ENCODE measurements at regions of chr13 and their contacts with region 1.

Region 1: DNA sequence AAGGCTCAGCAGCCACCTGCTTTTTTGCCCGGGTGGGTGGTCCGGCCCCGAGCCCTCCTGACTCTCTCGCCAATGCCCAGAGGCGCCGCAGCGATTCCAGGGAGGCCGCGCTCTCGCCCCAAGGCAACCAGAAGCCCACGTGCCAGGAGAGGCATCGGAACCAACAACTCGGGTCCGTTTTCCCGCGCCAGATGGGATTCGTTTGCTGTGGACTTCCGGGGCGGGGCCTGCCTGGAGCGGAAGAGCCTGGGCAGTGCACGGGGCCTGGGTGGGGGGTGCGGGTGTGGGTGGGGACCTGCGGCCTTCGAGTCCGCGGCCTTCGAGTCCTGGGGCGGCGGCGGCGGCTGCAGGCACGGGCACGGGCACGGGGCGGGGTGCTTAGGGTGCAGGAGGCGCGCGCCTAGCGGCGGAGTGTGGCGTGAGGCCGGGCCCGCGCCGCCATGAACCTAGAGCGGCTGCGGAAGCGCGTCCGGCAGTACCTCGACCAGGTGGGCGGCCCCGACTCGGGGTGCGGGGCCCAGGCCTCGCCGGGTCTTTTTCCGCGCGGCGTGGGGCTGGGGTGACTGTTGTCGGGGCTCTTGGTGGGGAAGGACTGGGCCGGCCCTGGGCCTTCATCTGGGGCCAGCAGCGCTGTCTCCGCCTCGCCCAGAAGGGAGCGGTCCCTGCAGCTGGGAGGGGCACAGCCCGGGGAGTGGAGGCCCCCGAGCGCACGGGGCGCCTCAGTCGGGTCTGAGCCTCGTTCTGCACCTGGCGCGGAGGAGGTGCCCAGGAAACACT is at the start of gene CDC16:
- DNase-seq: peak; percentile 95
- H3K4me3 Mint-ChIP-seq: peak within 1 kb of the TSS; percentile 92
- H3K27ac Mint-ChIP-seq: peak within 1 kb of the TSS; percentile 92
- H3K4me1 Mint-ChIP-seq: peaks cover 17% of the 10 kb centered on the region
- H3K27me3 Mint-ChIP-seq: peaks cover 4% of the 10 kb centered on the region
- total RNA-seq, gene CDC16: 84.5 and 85.4 TPM in 2 replicates

Region 2: GRCh38 chr13:113337556-113337955 is 897.3 kb before region 1 on chr13:
- intact Hi-C with region 1: no loop called
- DNase-seq: no peak
- H3K4me3 Mint-ChIP-seq: no peak overlapping the region
- H3K27ac Mint-ChIP-seq: no peak overlapping the region
- H3K4me1 Mint-ChIP-seq: no peaks in the 10 kb centered on the region
- H3K27me3 Mint-ChIP-seq: no peaks in the 10 kb centered on the region

Region 3: DNA sequence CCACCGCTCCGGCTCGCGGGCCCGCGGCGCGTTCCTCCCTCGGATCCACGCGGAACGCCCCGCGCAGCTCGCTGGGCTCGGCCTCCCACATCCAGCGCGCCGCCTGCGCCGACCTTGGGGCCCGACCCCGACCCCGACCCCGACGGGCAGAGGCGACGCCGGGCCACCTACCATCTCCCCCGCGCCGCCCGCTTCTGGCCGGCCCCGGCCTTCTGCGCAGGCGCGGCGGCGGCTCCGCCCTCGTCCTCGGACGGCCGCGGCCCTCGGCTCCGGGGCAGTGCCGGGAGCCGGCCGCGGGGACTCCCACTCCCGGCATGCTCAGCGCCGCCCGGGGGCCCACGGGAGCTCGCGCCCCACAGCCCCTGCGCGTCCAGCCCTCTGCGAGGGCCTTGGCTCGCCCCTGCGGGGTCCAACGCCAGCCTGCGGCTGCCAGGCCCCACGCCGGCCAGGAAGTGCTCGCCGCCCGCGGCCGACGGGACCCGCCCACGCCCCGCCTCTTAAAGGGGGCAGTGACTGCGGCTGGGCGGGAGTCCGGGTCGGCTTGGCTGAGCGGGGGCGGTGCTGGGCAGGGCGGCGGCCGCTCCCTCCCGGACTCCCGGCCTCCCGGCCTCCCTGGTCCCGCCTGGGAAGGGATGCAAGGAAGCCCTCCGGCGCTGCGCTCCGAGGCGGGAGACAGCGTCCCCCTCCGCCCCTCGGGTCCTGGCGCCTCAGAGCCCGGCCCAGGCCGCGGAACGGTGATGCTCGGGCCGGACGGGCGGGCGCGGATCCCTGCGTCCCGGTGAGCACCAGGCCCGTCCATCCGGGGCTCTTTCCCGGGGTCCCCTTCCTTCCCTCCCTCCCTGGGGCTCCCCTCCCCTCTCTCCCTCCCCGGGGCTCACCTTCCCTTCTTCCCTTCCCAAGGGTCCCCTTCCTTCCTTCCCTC is 744.1 kb before region 1 on chr13 and contains the start of gene DCUN1D2:
- intact Hi-C with region 1: loop called (anchors 2 kb)
- DNase-seq: peak; percentile 96
- H3K4me3 Mint-ChIP-seq: peak within 1 kb of the TSS; percentile 93
- H3K27ac Mint-ChIP-seq: peak within 1 kb of the TSS; percentile 89
- H3K4me1 Mint-ChIP-seq: peaks cover 49% of the 10 kb centered on the region
- H3K27me3 Mint-ChIP-seq: no peaks in the 10 kb centered on the region
- total RNA-seq, gene DCUN1D2: 21.4 and 29.9 TPM in 2 replicates

Region 4: GRCh38 chr13:113951246-113951999 is 283.4 kb before region 1 on chr13:
- intact Hi-C with region 1: loop called (anchors 2 kb)
- DNase-seq: peak; percentile 84
- H3K4me3 Mint-ChIP-seq: no peak overlapping the region
- H3K27ac Mint-ChIP-seq: no peak overlapping the region
- H3K4me1 Mint-ChIP-seq: no peaks in the 10 kb centered on the region
- H3K27me3 Mint-ChIP-seq: no peaks in the 10 kb centered on the region

Region 5: GRCh38 chr13:114110091-114110829 is 124.6 kb before region 1 on chr13:
- intact Hi-C with region 1: loop called (anchors 2 kb)
- DNase-seq: peak; percentile 91
- H3K4me3 Mint-ChIP-seq: peak overlapping the region; percentile 88
- H3K27ac Mint-ChIP-seq: peak overlapping the region; percentile 94
- H3K4me1 Mint-ChIP-seq: peaks cover 44% of the 10 kb centered on the region
- H3K27me3 Mint-ChIP-seq: no peaks in the 10 kb centered on the region

Region 6: GRCh38 chr13:114128624-114129522 is 106.0 kb before region 1 on chr13:
- intact Hi-C with region 1: loop called (anchors 2 kb)
- DNase-seq: peak; percentile 96
- H3K4me3 Mint-ChIP-seq: peak overlapping the region; percentile 99
- H3K27ac Mint-ChIP-seq: peak overlapping the region; percentile 89
- H3K4me1 Mint-ChIP-seq: peaks cover 63% of the 10 kb centered on the region
- H3K27me3 Mint-ChIP-seq: peaks cover 2% of the 10 kb centered on the region

Region 7: GRCh38 chr13:114281351-114282040 is 46.7 kb after region 1 on chr13 and contains the start of gene UPF3A:
- intact Hi-C with region 1: loop called (anchors 1 kb)
- DNase-seq: peak; percentile 96
- H3K4me3 Mint-ChIP-seq: peak within 1 kb of the TSS; percentile 94
- H3K27ac Mint-ChIP-seq: peak within 1 kb of the TSS; percentile 99
- H3K4me1 Mint-ChIP-seq: peaks cover 40% of the 10 kb centered on the region
- H3K27me3 Mint-ChIP-seq: no peaks in the 10 kb centered on the region
- total RNA-seq, gene UPF3A: 51.4 and 52.1 TPM in 2 replicates

Measured in activated CD4-positive, alpha-beta T cell treated with anti-CD3 and anti-CD28 coated beads, Interleukin-2, amount 10 ng/mL, durations not matched to agents 24 days and 14 days (primary cell).